OCI-LY7 (cell line): ENCODE measurements at regions of chr3 and their contacts with region 1.

Region 1: DNA sequence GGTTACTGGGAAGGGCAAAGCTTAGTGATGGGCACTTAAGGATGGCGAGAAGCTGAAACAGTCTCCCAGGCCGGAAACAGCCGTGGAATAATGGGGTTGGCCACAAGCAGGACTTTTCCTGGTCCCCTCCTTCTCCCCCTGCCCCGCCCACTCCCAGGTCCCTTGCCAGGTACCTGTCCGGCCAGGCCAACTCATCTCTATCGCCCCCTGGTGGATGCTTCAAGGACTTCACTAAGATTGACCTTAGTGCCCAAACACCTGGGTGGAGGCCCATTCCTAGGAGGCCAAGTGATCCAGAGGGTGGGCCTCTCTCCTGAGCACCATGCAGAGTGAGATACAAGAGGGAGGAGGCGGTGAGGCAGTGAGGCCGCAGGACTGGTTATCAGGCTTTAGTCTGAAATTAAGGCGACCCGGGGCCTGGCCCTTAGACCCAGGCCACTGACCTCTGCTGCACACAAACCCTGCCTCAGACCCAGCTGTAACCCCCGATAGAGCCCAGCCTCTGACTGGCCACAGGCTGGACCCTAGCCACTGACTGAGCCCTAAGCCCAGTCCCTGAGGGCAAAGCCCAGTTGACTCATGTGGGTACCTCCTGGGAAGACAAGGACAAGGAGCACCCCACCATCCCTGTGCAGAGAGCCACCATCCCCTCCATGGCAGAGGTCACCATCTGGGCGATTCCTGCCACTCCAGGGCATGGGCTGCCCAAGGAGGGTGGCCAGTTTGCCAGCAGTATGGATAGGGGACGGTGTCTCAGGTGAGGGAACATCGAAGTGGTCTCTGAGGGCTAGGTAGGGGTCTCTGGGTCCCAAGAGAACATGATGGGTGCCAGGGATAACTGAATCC is 37.6 kb downstream of the VIPR1 start:
- DNase-seq: peak; percentile 65
- H3K4me3 ChIP-seq: no peak overlapping the region
- H3K27ac ChIP-seq: no peak overlapping the region
- H3K4me1 ChIP-seq: no peaks in the 10 kb centered on the region
- CTCF ChIP-seq: peak; percentile 86

Region 2: GRCh38 chr3:42247576-42248027 is 292.5 kb before region 1 on chr3:
- CTCF ChIA-PET with region 1: interaction called, 8 read pairs
- POLR2A ChIA-PET with region 1: no interaction called
- intact Hi-C with region 1: loop called (anchors 1 kb)
- DNase-seq: peak; percentile 76
- H3K4me3 ChIP-seq: no peak overlapping the region
- H3K27ac ChIP-seq: no peak overlapping the region
- H3K4me1 ChIP-seq: no peaks in the 10 kb centered on the region
- CTCF ChIP-seq: peak; percentile 91

Region 3: GRCh38 chr3:42502429-42503250 is 37.5 kb before region 1 on chr3 and contains the start of gene VIPR1:
- CTCF ChIA-PET with region 1: no interaction called
- POLR2A ChIA-PET with region 1: no interaction called
- intact Hi-C with region 1: loop called (anchors 5 kb)
- DNase-seq: peak; percentile 79
- H3K4me3 ChIP-seq: peak within 1 kb of the TSS; percentile 63
- H3K27ac ChIP-seq: no peak within 1 kb of the TSS
- H3K4me1 ChIP-seq: peaks cover 15% of the 10 kb centered on the region
- CTCF ChIP-seq: no peak
- total RNA-seq, gene VIPR1: 0.21 TPM in 1 of 2 replicates, not detected in the other